SK-N-SH (cell line): ENCODE measurements at regions of chr9 and their contacts with region 1.

Region 1: DNA sequence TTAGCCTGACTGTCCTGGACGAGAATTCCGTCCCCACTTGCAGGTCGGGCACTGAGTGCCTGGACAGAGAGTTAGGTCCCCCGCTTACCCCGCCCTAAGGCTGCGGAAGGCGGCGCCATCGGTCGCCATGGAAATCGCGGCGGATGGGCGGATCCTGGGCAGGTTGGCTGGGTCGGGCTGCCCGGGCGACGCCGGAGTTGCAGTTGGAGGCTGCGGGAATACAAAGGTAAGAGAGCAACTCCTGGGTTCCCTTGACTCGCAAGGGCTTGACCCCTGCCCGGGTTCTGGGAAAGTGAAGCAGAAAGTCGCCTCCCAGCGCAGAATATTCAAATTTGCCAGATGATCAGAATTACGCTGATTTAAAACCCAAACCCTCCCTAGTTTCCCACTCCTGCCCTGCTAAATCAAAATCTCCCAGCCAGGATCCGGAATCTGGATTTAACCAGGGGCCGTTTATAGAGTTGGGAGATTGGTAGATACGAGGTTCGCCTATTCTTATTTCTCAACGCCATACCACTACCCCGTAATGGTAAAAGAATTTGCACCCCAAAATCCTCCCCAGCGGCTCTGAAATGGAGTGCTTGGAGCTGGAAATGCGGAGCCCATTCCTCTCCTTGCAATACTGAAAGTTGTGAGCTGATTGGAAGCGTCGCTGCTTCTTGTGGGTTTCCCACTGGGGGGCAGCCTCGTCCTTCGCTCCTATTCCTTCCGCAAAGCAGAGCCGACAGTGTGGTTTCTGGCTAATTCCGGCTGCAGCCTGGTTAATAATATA is 156.4 kb upstream of the RASEF start:
- DNase-seq: peak; percentile 84
- H3K4me3 ChIP-seq: peak overlapping the region; percentile 80 to 83
- H3K27ac ChIP-seq: peak overlapping the region; percentile 57 to 93; a peak in 3 of 4 replicates
- H3K4me1 ChIP-seq: peaks cover 0 to 17% of the 10 kb centered on the region in 2 experiments; a peak in 3 of 4 replicates
- H3K27me3 ChIP-seq: no peaks in the 10 kb centered on the region
- CTCF ChIP-seq: peak; percentile 45
- EP300 ChIP-seq: no peak
- RAD21 ChIP-seq: peak; percentile 82

Region 2: DNA sequence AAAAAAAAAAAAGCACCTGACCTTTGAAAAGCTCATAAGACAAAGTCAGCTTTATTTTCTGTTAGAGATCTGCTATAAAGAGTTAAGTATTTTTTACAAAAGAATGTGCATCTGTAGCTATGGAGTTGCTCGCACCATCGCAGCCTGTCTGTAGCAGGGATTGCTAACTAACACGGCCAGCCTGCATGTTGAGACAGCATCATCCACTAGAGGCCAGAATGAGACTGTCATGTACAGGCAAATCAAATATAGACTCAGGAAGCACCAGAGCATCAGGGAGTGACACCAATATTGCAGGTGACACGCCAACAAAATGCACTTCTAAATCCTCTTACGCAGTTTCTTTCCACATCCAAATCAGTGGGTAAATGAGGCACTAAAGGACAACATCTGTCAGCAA is 20.1 kb before region 1 on chr9:
- CTCF ChIA-PET with region 1: interaction called, 11 read pairs
- POLR2A ChIA-PET with region 1: interaction called, 7 read pairs
- DNase-seq: peak; percentile 63
- H3K4me3 ChIP-seq: no peak overlapping the region; a peak in 1 of 4 replicates
- H3K27ac ChIP-seq: no peak overlapping the region
- H3K4me1 ChIP-seq: peaks cover 0 to 8% of the 10 kb centered on the region in 2 experiments; a peak in 1 of 4 replicates
- H3K27me3 ChIP-seq: peaks cover 4% of the 10 kb centered on the region; the same call in 1 of the 2 replicates
- CTCF ChIP-seq: peak; percentile 69
- EP300 ChIP-seq: no peak
- RAD21 ChIP-seq: peak; percentile 97

Region 3: GRCh38 chr9:83304686-83305085 is 85.3 kb after region 1 on chr9:
- CTCF ChIA-PET with region 1: interaction called, 13 read pairs
- POLR2A ChIA-PET with region 1: interaction called, 5 read pairs
- DNase-seq: peak; percentile 77
- H3K4me3 ChIP-seq: no peak overlapping the region; a peak in 1 of 4 replicates
- H3K27ac ChIP-seq: peak overlapping the region; percentile 57 to 98
- H3K4me1 ChIP-seq: peaks cover 26 to 39% of the 10 kb centered on the region in 2 experiments
- H3K27me3 ChIP-seq: no peaks in the 10 kb centered on the region
- CTCF ChIP-seq: no peak
- EP300 ChIP-seq: peak in 1 of 2 experiments; percentile 71; a peak in 2 of 4 replicates
- RAD21 ChIP-seq: no peak; the same call in 1 of the 2 replicates

Region 4: GRCh38 chr9:83327323-83327722 is 108.0 kb after region 1 on chr9:
- CTCF ChIA-PET with region 1: interaction called, 20 read pairs
- POLR2A ChIA-PET with region 1: interaction called, 5 read pairs
- DNase-seq: peak; percentile 55
- H3K4me3 ChIP-seq: no peak overlapping the region; a peak in 2 of 4 replicates
- H3K27ac ChIP-seq: peak overlapping the region; percentile 53 to 96; a peak in 3 of 4 replicates
- H3K4me1 ChIP-seq: peaks cover 6 to 19% of the 10 kb centered on the region in 2 experiments; a peak in 3 of 4 replicates
- H3K27me3 ChIP-seq: no peaks in the 10 kb centered on the region
- CTCF ChIP-seq: no peak
- EP300 ChIP-seq: no peak
- RAD21 ChIP-seq: 0 out of 2 replicates have a peak, but pooled peaks have one; percentile 19